Gastrocnemius medialis (tissue), 4 donors: ENCODE measurements at regions of chr3 and their contacts with region 1.

Region 1: GRCh38 chr3:183265834-183266417 is 12.9 kb downstream of the B3GNT5 start:
- DNase-seq: peak in 1 of 2 donors; percentile 57
- ATAC-seq: peak; percentile 83 to 92
- H3K4me3 ChIP-seq: no peak overlapping the region
- H3K27ac ChIP-seq: peak overlapping the region; percentile 56 to 72 (median 64)
- H3K4me1 ChIP-seq: peaks cover 35 to 53% of the 10 kb centered on the region in 2 donors
- H3K27me3 ChIP-seq: no peaks in the 10 kb centered on the region
- CTCF ChIP-seq: no peak
- POLR2A ChIP-seq: no peak

Region 2: GRCh38 chr3:183099026-183099837 is 166.7 kb before region 1 on chr3 and contains the start of gene MCCC1:
- in situ Hi-C with region 1: no loop called
- intact Hi-C with region 1: loop called (anchors 5 kb)
- DNase-seq: peak; percentile 98 to 99
- ATAC-seq: peak; percentile 99
- H3K4me3 ChIP-seq: peak within 1 kb of the TSS; percentile 76 to 95 (median 82)
- H3K27ac ChIP-seq: peak within 1 kb of the TSS; percentile 86 to 94 (median 92)
- H3K4me1 ChIP-seq: peaks cover 5 to 15% of the 10 kb centered on the region in 2 donors
- H3K27me3 ChIP-seq: no peaks in the 10 kb centered on the region
- CTCF ChIP-seq: peak in 1 of 5 experiments; percentile 7
- POLR2A ChIP-seq: peak; percentile 86 to 88
- total RNA-seq, gene MCCC1: 11.5 to 24.5 (median 20.6) TPM

Region 3: GRCh38 chr3:183178629-183179549 is 87.0 kb before region 1 on chr3:
- in situ Hi-C with region 1: no loop called
- intact Hi-C with region 1: no loop called
- DNase-seq: no peak
- ATAC-seq: peak; percentile 27 to 43
- H3K4me3 ChIP-seq: peak overlapping the region; percentile 51 to 79 (median 60)
- H3K27ac ChIP-seq: no peak overlapping the region
- H3K4me1 ChIP-seq: peaks cover 6 to 9% of the 10 kb centered on the region in 2 donors
- H3K27me3 ChIP-seq: peaks cover 22 to 50% (median 32%) of the 10 kb centered on the region in 3 donors
- CTCF ChIP-seq: no peak
- POLR2A ChIP-seq: no peak

Region 4: GRCh38 chr3:183306798-183307671 is 41.1 kb after region 1 on chr3:
- in situ Hi-C with region 1: no loop called
- intact Hi-C with region 1: loop called (anchors 2 kb)
- DNase-seq: peak; percentile 71 to 90
- ATAC-seq: peak; percentile 76
- H3K4me3 ChIP-seq: peak overlapping the region in 1 of 4 donors; percentile 21
- H3K27ac ChIP-seq: peak overlapping the region; percentile 89 to 99 (median 93)
- H3K4me1 ChIP-seq: peaks cover 49 to 67% of the 10 kb centered on the region in 2 donors
- H3K27me3 ChIP-seq: no peaks in the 10 kb centered on the region
- CTCF ChIP-seq: no peak
- POLR2A ChIP-seq: peak; percentile 9 to 53

Region 5: GRCh38 chr3:183489455-183490210 is 223.7 kb after region 1 on chr3:
- in situ Hi-C with region 1: no loop called
- intact Hi-C with region 1: loop called (anchors 10 kb)
- DNase-seq: no peak
- ATAC-seq: peak; percentile 92 to 93
- H3K4me3 ChIP-seq: peak overlapping the region in 1 of 4 donors; percentile 6
- H3K27ac ChIP-seq: peak overlapping the region; percentile 76 to 90 (median 84)
- H3K4me1 ChIP-seq: peaks cover 28 to 42% of the 10 kb centered on the region in 2 donors
- H3K27me3 ChIP-seq: no peaks in the 10 kb centered on the region
- CTCF ChIP-seq: no peak
- POLR2A ChIP-seq: peak in 1 of 2 donors; percentile 45

Region 6: GRCh38 chr3:183884427-183885296 is 618.7 kb after region 1 on chr3 and contains the start of gene PARL:
- in situ Hi-C with region 1: no loop called
- intact Hi-C with region 1: loop called (anchors 10 kb)
- DNase-seq: peak; percentile 93 to 94
- ATAC-seq: peak; percentile 98 to 99
- H3K4me3 ChIP-seq: peak within 1 kb of the TSS; percentile 83 to 96 (median 92)
- H3K27ac ChIP-seq: peak within 1 kb of the TSS; percentile 77 to 90 (median 88)
- H3K4me1 ChIP-seq: peaks cover 20 to 23% of the 10 kb centered on the region in 2 donors
- H3K27me3 ChIP-seq: no peaks in the 10 kb centered on the region
- CTCF ChIP-seq: peak; percentile 93 to 96 (median 96)
- POLR2A ChIP-seq: peak; percentile 43 to 72
- total RNA-seq, gene PARL: 30.5 to 49.5 (median 41.3) TPM